ENCODE measurements at regions of chr5 and their contacts with region 1.

Region 1: GRCh38 chr5:75053304-75054133 is 1.2 kb upstream of the GCNT4 start:
- DNase-seq: peak; percentile 73
- ATAC-seq: peak; percentile 52
- H3K4me3 ChIP-seq: peak overlapping the region; percentile 82
- H3K27ac ChIP-seq: peak overlapping the region; percentile 68
- H3K4me1 ChIP-seq: peaks cover 19% of the 10 kb centered on the region
- H3K27me3 ChIP-seq: no peaks in the 10 kb centered on the region
- CTCF ChIP-seq: peak; percentile 19; the same call in 1 of the 2 replicates
- POLR2A ChIP-seq: peak; percentile 45; the same call in 1 of the 2 replicates
- RAD21 ChIP-seq: no peak

Region 2: DNA sequence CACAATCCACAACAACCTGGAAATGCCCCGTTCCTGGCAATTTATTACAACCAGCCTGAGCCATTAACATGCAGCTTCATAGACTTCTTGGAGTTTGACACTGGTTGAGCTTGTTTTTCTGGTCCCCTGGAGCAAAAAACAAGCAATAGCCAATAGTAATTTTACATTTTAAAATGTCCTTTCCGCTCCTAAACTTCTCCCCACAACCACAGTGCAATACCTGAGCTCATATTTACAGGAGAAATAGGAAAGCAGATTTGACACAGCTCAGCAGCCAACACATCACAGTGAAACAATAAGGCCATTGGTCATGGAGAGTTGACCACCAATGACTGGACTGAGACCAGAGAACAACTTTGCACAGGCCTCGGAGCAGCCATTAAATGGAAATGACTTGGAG is 486.1 kb before region 1 on chr5:
- CTCF ChIA-PET with region 1: no interaction called
- POLR2A ChIA-PET with region 1: no interaction called
- dilution Hi-C with region 1: no loop called
- in situ Hi-C with region 1: no loop called
- intact Hi-C with region 1: no loop called
- DNase-seq: no peak
- ATAC-seq: no peak
- H3K4me3 ChIP-seq: no peak overlapping the region
- H3K27ac ChIP-seq: no peak overlapping the region
- H3K4me1 ChIP-seq: no peaks in the 10 kb centered on the region
- H3K27me3 ChIP-seq: no peaks in the 10 kb centered on the region; the same call in 1 of the 2 replicates
- CTCF ChIP-seq: no peak
- POLR2A ChIP-seq: no peak
- RAD21 ChIP-seq: no peak

Region 3: DNA sequence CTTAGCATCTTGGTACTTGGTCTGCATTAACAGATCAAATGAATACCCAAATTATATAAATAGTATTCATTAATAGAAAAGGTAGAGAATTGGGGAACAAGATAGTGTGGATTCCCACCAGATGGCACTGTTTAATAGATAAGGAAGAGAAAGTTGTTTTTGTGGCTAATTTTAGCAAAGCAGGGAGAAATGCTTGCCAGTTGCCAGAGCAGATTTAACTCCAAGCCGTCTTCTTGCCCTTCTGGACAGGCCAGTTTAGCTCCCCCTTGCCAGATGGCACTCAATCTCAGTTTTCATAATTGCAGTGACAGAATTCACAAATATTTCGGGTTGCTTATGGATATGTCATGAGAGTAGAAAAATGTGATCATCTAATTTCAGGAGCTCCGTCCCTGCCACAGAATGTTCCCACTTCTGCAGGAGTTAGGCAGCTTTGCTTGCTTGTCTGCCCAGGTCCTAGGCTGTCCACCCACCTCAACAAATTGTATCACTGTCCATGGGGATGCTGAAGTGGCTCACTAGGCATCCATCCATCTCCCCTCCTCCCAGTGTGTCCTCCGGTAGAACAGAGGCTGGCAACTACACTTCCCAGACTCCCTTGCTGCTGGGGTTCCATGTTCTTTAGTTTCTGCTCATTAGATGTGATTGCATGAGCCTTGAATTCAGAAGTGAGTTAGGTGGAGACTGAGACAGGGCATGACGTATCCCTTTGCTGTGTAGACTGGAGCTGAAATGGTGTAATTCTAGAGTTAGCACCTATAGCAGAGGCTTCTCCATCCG is 380.3 kb before region 1 on chr5:
- CTCF ChIA-PET with region 1: interaction called, 4 read pairs
- POLR2A ChIA-PET with region 1: no interaction called
- dilution Hi-C with region 1: no loop called
- in situ Hi-C with region 1: no loop called
- intact Hi-C with region 1: loop called (anchors 5 kb)
- DNase-seq: peak; percentile 67
- ATAC-seq: peak; percentile 78
- H3K4me3 ChIP-seq: no peak overlapping the region
- H3K27ac ChIP-seq: no peak overlapping the region
- H3K4me1 ChIP-seq: peaks cover 3% of the 10 kb centered on the region
- H3K27me3 ChIP-seq: peaks cover 3% of the 10 kb centered on the region; the same call in 1 of the 2 replicates
- CTCF ChIP-seq: peak; percentile 71
- POLR2A ChIP-seq: no peak
- RAD21 ChIP-seq: peak; percentile 72

Region 4: DNA sequence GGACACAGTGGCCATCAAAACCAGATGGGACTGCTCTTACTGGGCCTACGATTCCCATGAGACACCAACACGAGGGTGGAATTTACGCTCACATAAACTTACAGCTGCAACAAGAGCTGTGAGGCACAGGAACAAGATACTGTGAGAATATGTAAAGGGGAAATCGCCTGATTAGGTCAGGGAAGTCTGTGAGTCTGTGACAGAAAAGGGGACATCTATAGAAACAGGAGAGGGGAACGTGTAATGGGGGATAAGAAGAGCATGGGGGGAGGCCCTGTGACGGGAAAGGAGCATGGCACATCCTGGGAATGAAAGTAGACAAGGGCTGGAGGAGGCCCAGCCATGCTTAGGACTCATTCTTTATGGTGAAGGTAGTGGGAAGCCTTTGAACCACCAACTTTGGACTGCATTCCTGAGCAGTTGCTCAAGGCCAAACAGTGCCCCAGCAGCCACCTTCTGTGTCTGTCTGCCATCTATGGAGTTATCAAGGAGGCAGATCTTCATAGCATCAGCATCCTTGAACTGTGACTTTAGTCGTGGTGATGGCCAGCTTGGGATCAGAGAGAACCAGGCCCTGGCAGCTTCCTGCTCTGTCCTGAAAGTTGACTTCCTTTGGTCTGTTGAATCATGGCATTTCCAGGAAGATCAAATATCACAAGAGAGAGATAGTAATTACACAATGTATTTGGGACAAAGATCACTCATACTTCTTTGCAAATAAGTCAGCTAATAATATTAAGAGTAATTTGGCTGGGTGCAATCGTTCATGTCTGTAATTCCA is 99.4 kb before region 1 on chr5:
- CTCF ChIA-PET with region 1: interaction called, 4 read pairs
- POLR2A ChIA-PET with region 1: no interaction called
- dilution Hi-C with region 1: no loop called
- in situ Hi-C with region 1: no loop called
- intact Hi-C with region 1: loop called (anchors 2 kb)
- DNase-seq: peak; percentile 77
- ATAC-seq: peak; percentile 48
- H3K4me3 ChIP-seq: no peak overlapping the region
- H3K27ac ChIP-seq: peak overlapping the region; percentile 95
- H3K4me1 ChIP-seq: peaks cover 23% of the 10 kb centered on the region
- H3K27me3 ChIP-seq: no peaks in the 10 kb centered on the region
- CTCF ChIP-seq: no peak
- POLR2A ChIP-seq: no peak
- RAD21 ChIP-seq: no peak

Region 5: DNA sequence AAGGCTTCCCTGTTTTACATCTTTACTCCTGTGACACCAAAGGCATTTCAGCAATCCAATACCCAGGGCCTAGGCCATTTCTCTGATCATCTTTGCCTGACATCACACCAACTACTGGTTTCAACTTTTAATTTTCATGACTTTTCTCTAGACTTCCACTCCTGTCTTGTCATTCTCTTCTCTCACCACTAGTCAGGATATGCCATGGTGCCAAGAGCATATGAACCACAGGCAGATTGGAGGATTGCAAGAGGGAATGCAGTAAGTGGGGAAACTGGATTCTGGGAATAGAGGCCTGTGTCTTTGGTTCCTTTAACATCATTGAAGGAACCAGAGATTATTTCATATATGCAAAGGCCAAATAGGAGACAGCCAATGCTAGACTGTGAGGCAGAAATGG is 113.8 kb after region 1 on chr5:
- CTCF ChIA-PET with region 1: no interaction called
- POLR2A ChIA-PET with region 1: no interaction called
- dilution Hi-C with region 1: no loop called
- in situ Hi-C with region 1: no loop called
- intact Hi-C with region 1: no loop called
- DNase-seq: no peak
- ATAC-seq: no peak
- H3K4me3 ChIP-seq: no peak overlapping the region
- H3K27ac ChIP-seq: no peak overlapping the region
- H3K4me1 ChIP-seq: no peaks in the 10 kb centered on the region
- H3K27me3 ChIP-seq: no peaks in the 10 kb centered on the region
- CTCF ChIP-seq: 0 out of 2 replicates have a peak, but pooled peaks have one; percentile 1
- POLR2A ChIP-seq: no peak
- RAD21 ChIP-seq: no peak

Region 6: DNA sequence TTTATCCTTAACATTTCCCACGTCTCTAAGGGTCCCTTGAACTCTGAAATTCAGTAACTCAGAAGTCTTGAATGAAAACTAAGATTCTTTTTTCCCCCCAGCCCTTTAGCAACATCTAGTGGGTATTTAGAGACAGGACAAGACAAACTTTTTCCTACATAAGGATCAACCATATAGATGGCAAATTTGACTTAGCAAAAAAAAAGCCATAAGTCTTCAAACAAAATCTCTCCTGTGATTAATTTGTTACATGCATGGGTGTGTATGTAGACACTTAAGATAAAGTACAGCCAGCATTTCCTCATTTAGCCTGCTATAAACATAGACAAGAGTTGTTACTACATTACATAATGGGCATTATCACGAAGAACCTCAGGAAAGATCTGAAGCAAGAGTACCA is 212.2 kb after region 1 on chr5:
- CTCF ChIA-PET with region 1: no interaction called
- POLR2A ChIA-PET with region 1: interaction called, 4 read pairs
- dilution Hi-C with region 1: no loop called
- in situ Hi-C with region 1: no loop called
- intact Hi-C with region 1: loop called (anchors 10 kb)
- DNase-seq: peak; percentile 53
- ATAC-seq: peak; percentile 68
- H3K4me3 ChIP-seq: no peak overlapping the region
- H3K27ac ChIP-seq: no peak overlapping the region
- H3K4me1 ChIP-seq: no peaks in the 10 kb centered on the region
- H3K27me3 ChIP-seq: no peaks in the 10 kb centered on the region; the same call in 1 of the 2 replicates
- CTCF ChIP-seq: peak; percentile 71
- POLR2A ChIP-seq: no peak
- RAD21 ChIP-seq: peak; percentile 71

Region 7: DNA sequence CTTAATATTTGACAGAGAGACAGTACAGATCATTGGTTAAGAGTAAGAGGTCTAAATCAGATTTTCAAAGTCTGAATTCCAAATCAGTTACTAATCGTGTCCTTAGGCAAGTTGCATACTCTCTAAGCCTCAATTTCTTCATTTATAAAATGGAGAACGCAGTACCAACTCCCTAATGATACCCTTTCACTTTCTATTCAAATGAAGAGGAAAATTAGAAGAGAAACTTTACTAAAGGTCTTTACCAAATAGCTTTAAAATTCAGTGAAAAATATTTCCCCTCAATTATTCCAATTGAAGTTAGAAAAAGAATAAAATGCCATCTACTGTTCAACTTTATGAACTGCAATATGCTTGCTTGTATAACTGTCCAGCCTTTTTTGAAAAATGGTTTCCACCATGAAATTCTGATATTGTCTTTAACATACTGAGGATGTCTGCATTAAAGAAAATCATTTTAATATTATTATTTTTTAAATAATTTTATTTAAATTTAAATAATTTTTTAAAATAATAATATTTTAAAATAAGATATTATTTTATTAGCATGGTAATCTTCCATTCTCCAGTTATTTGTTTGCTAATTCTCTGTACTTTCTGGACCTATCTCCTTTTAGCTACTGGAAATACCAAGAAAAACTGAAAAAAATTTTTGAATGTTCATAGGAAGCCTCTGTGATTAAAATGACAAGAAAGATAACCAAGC is 627.8 kb after region 1 on chr5:
- CTCF ChIA-PET with region 1: no interaction called
- POLR2A ChIA-PET with region 1: no interaction called
- dilution Hi-C with region 1: no loop called
- in situ Hi-C with region 1: no loop called
- intact Hi-C with region 1: loop called (anchors 10 kb)
- DNase-seq: peak; percentile 60
- ATAC-seq: peak; percentile 59
- H3K4me3 ChIP-seq: no peak overlapping the region
- H3K27ac ChIP-seq: no peak overlapping the region
- H3K4me1 ChIP-seq: peaks cover 3% of the 10 kb centered on the region
- H3K27me3 ChIP-seq: no peaks in the 10 kb centered on the region
- CTCF ChIP-seq: peak; percentile 66
- POLR2A ChIP-seq: no peak
- RAD21 ChIP-seq: peak; percentile 56

Region 8: GRCh38 chr5:76818844-76819831 is 1765.6 kb after region 1 on chr5 and contains the start of gene F2RL1:
- CTCF ChIA-PET with region 1: no interaction called
- POLR2A ChIA-PET with region 1: no interaction called
- dilution Hi-C with region 1: no loop called
- in situ Hi-C with region 1: no loop called
- intact Hi-C with region 1: loop called (anchors 10 kb)
- DNase-seq: peak; percentile 73
- ATAC-seq: peak; percentile 71
- H3K4me3 ChIP-seq: peak within 1 kb of the TSS; percentile 73
- H3K27ac ChIP-seq: peak within 1 kb of the TSS; percentile 17; the same call in 1 of the 2 replicates
- H3K4me1 ChIP-seq: peaks cover 6% of the 10 kb centered on the region
- H3K27me3 ChIP-seq: no peaks in the 10 kb centered on the region
- CTCF ChIP-seq: no peak
- POLR2A ChIP-seq: no peak
- RAD21 ChIP-seq: no peak
- total RNA-seq, gene F2RL1: 9.4 and 12.4 TPM in 2 replicates

Measured in IMR-90 (cell line).